Left colon (tissue), 2 donors: ENCODE measurements at regions of chr5 and their contacts with region 1.

Region 1: DNA sequence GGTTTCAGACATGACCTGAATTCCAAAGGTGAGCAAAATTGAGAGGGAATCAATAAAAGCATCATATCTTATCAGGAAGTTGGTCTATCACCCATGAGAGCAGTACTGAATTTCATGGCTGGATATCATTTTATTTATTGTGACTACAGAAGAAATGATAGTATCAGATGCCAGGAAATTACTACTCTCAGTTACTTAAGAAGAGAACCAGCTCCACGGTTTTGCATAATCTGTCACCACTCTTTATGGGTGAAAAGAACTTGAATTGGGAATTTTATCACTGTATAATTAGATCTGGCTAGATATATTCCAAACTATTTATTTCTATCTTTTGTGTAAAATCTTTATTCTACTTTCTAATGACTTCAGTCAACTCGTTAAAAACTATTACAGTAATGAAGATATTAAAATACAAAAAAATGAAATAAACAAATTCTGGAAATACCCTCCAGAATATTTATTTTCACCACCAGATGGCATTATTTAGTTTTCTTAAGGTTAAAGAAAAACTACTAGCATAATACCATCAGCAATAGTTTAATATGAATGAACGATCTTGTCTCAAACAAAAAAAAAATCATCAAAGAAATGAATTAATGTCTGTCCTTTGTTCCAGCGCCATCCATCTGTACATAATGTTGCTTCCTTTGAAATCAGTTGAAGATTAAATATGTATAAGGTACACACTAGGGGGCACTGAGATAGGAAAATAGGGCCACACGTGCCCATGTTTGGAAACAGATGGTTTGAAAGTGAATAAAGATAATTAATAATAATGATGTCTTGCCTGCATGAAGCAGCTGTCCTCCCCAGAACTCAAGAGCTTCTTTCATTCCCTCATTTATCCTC is 84.7 kb upstream of the SLCO6A1 start:
- DNase-seq: no peak
- ATAC-seq: no peak

Region 2: DNA sequence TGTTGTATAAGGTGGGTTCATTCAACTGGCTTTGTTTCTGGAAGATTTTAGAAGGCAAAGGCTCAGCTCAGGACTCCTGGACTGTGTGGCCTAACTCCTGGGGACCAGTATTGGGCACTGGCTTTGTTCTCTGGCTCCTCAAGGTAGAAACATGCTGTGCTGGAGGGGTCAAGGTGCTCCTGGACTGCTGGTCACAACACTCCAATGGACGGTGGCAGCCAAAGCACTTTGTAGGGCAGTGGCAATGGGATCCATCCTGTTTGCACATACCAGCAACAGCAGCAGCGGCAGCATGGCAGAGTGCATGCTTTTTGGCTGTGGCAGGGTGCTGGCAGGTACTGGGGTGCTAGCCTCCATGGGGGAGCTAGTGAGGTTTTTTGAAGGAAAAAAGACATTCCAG is 150.0 kb before region 1 on chr5:
- intact Hi-C with region 1: no loop called
- DNase-seq: no peak
- ATAC-seq: no peak

Region 3: GRCh38 chr5:102536323-102536928 is 47.1 kb before region 1 on chr5:
- intact Hi-C with region 1: no loop called
- DNase-seq: no peak
- ATAC-seq: no peak

Region 4: GRCh38 chr5:103041071-103041676 is 457.7 kb after region 1 on chr5:
- intact Hi-C with region 1: loop called in 1 of 2 experiments (anchors 10 kb)
- DNase-seq: no peak
- ATAC-seq: peak; percentile 37